Endothelial cell of umbilical vein (primary cell): ENCODE measurements at regions of chr22 and their contacts with region 1.

Region 1: DNA sequence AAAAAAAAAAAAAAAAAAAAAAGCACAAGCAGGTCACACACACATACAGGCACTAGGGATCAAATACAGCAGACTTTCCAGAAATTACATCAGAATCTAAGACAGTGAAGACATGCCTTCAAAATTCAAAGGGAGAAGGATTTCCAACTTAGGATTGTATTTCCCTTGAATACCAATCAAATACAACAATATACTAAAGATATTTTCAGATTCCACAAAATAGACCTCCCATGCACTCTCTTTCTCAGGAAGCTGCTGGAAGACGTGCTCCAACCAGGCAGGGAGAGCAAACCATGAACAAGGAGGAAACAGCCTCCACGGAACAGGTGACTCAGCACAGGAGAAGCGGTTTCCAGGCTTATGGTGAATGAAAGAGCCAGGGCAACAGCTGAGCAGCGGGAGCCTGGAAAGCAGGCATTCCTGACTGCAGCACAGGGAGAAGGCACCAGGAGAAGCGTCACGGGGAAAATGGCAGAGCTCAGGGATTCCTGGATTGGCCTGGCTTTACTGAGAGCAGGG is 32.0 kb downstream of the TMEM184B start:
- DNase-seq: peak; percentile 94
- H3K4me3 ChIP-seq: no peak overlapping the region
- H3K27ac ChIP-seq: peak overlapping the region; percentile 74
- H3K4me1 ChIP-seq: peaks cover 31% of the 10 kb centered on the region
- H3K27me3 ChIP-seq: no peaks in the 10 kb centered on the region
- CTCF ChIP-seq: no peak
- POLR2A ChIP-seq: no peak

Region 2: DNA sequence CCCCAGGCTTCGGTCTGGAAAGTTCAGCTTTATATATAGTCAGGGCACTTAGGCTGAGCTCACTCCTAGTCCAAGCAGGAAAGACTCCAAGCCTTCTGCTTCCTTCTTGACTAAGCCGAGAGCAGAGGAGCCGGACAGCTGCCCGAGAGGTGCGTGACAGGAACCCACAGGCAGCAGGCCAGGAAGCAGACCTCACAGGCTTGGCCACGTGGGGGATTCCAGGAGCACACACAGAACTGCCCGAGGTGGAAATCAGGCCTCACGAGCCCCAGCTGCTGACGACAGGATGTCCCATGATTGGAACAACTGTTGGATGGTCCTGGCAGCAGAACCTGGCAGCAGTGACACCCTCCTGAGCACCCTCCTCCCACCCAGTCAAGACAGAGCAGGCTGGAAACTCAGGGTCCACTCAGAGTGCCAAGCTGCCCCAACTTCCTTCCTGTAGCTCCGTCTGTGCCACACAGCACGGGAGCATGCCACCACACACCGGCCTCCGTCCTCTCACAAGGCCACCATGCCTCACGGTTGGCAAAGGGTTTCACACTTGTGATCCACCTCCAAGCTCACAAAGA is 64.5 kb before region 1 on chr22:
- CTCF ChIA-PET with region 1: no interaction called
- POLR2A ChIA-PET with region 1: no interaction called
- dilution Hi-C with region 1: no loop called
- intact Hi-C with region 1: loop called (anchors 2 kb)
- DNase-seq: peak; percentile 99
- H3K4me3 ChIP-seq: no peak overlapping the region
- H3K27ac ChIP-seq: peak overlapping the region; percentile 99
- H3K4me1 ChIP-seq: peaks cover 69% of the 10 kb centered on the region
- H3K27me3 ChIP-seq: no peaks in the 10 kb centered on the region
- CTCF ChIP-seq: no peak
- POLR2A ChIP-seq: no peak

Region 3: DNA sequence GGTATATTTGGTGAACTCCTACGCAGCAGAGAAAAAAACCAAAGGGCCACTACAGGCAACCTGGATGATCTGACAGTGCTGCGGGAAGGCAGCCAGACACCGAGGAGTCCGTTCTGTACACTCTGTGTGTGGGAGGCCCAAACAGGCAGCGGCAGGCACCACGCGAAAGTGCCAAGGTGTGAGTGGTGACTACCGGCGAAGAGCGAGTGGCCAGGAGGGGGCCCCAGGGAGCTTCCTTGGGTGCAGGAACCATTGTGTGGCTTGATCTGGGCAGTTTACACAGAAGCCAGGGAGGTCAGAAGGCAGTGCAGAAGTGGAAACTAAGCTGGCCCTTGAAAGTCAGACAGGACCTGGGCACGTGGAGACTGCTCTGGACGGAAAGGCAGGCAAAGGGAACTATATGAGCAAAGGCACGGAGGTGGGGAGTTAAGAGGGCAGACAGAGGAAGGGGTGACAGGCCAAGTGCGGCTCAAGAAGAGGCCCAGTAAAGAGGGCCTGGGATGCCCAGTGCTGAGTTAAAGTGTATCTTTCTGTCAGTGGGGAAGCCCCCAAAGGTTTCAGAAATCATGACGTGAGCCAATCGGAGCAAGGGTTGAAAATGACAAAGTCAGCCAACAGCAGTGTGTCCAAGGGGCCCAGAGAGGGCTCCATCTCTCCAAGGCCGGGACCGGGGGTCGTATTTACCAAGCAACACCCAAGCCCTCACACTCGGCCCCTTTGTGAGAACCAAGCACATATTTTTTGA is 21.4 kb after region 1 on chr22:
- CTCF ChIA-PET with region 1: interaction called, 10 read pairs
- POLR2A ChIA-PET with region 1: no interaction called
- dilution Hi-C with region 1: no loop called
- intact Hi-C with region 1: loop called (anchors 2 kb)
- DNase-seq: peak; percentile 29
- H3K4me3 ChIP-seq: no peak overlapping the region
- H3K27ac ChIP-seq: no peak overlapping the region
- H3K4me1 ChIP-seq: peaks cover 21% of the 10 kb centered on the region
- H3K27me3 ChIP-seq: no peaks in the 10 kb centered on the region
- CTCF ChIP-seq: peak; percentile 52 to 71
- POLR2A ChIP-seq: no peak

Region 4: DNA sequence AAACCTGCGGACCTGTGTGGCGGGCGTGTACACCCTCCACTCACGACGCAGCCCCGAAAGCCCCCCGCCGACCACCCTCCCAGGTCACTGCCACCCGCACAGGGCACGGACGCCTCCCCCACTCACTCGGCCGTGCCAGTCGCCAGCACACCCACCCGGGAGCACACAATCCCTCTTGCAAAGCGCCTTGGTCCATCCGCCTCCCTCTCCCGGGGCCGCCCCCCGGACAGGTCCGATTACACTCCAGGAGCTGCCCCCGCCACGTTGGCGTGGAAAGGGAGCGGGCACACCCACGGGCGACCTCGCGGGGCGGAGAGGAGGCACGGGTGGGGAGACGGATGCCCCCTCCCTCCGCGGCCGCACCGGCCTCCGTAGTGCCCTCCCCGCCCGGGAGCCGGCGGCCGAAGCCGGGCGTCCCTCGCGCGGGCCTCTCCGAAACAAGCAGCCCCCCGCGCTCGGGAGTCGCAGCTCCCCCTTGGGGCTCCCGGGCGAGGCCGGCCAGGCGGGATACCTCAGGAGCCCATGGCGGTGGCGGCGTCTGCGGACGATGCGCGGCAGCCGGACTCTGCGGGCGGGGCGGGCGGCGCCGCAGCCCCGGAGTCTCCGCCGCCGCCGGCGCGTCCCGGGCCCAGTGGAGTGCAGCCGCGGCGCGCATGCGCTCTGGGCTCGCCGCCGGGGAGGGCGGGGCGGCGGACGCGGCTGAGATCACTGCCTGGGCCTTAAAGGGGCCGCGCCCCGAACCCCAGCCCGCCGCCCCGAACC is 31.8 kb after region 1 on chr22 and contains the start of gene TMEM184B:
- CTCF ChIA-PET with region 1: interaction called, 10 read pairs
- POLR2A ChIA-PET with region 1: no interaction called
- dilution Hi-C with region 1: no loop called
- intact Hi-C with region 1: loop called (anchors 5 kb)
- DNase-seq: peak; percentile 75
- H3K4me3 ChIP-seq: peak within 1 kb of the TSS; percentile 86 to 99 (median 92)
- H3K27ac ChIP-seq: peak within 1 kb of the TSS; percentile 76
- H3K4me1 ChIP-seq: peaks cover 20% of the 10 kb centered on the region
- H3K27me3 ChIP-seq: peaks cover 0 to 3% of the 10 kb centered on the region in 2 experiments
- CTCF ChIP-seq: no peak
- POLR2A ChIP-seq: peak; percentile 84
- total RNA-seq, gene TMEM184B: 96.6 and 99.8 TPM in 2 replicates

Region 5: GRCh38 chr22:38461414-38462081 is 220.8 kb after region 1 on chr22:
- CTCF ChIA-PET with region 1: no interaction called
- POLR2A ChIA-PET with region 1: no interaction called
- dilution Hi-C with region 1: no loop called
- intact Hi-C with region 1: no loop called
- DNase-seq: peak; percentile 65
- H3K4me3 ChIP-seq: no peak overlapping the region
- H3K27ac ChIP-seq: no peak overlapping the region
- H3K4me1 ChIP-seq: no peaks in the 10 kb centered on the region
- H3K27me3 ChIP-seq: peaks cover 28 to 31% of the 10 kb centered on the region in 2 experiments
- CTCF ChIP-seq: no peak
- POLR2A ChIP-seq: no peak